ENCODE measurements at regions of chr5 and their contacts with region 1.

Region 1: DNA sequence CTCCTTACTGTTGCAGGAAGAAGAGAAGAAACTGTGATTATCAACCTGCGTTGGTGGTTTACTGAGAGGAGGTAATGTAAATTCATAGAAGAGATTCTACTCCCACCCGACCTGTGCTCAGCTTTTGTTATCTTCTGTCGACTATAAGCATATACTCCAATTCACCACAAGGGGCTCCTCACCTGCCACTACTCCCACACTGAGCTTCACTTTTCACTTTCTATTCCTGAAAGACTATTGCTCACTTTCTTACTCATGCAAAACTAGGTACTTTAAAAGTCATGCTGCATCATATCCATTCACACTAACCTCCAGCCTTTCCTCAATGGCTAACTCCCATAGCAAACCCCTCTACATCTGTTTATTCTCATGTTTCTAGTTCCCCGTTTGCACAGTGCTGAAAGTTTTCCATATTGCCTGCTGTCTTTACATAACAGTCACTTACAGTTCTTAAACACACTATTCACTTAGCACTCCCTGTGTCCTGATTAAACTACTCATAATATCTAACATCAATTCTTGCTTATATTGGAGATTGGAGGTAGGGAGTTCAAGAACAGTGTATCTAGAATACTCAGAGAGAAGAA is 1062.6 kb downstream of the NR2F1-AS1 start:
- DNase-seq: peak; percentile 62
- H3K4me3 ChIP-seq: no peak overlapping the region
- H3K27ac ChIP-seq: no peak overlapping the region
- H3K4me1 ChIP-seq: no peaks in the 10 kb centered on the region
- H3K27me3 ChIP-seq: no peaks in the 10 kb centered on the region
- CTCF ChIP-seq: peak; percentile 79 to 88

Region 2: GRCh38 chr5:92378966-92379611 is 139.3 kb before region 1 on chr5:
- CTCF ChIA-PET with region 1: no interaction called
- dilution Hi-C with region 1: no loop called
- in situ Hi-C with region 1: no loop called
- intact Hi-C with region 1: no loop called
- DNase-seq: peak; percentile 13
- H3K4me3 ChIP-seq: no peak overlapping the region
- H3K27ac ChIP-seq: no peak overlapping the region
- H3K4me1 ChIP-seq: no peaks in the 10 kb centered on the region
- H3K27me3 ChIP-seq: no peaks in the 10 kb centered on the region
- CTCF ChIP-seq: no peak

Region 3: DNA sequence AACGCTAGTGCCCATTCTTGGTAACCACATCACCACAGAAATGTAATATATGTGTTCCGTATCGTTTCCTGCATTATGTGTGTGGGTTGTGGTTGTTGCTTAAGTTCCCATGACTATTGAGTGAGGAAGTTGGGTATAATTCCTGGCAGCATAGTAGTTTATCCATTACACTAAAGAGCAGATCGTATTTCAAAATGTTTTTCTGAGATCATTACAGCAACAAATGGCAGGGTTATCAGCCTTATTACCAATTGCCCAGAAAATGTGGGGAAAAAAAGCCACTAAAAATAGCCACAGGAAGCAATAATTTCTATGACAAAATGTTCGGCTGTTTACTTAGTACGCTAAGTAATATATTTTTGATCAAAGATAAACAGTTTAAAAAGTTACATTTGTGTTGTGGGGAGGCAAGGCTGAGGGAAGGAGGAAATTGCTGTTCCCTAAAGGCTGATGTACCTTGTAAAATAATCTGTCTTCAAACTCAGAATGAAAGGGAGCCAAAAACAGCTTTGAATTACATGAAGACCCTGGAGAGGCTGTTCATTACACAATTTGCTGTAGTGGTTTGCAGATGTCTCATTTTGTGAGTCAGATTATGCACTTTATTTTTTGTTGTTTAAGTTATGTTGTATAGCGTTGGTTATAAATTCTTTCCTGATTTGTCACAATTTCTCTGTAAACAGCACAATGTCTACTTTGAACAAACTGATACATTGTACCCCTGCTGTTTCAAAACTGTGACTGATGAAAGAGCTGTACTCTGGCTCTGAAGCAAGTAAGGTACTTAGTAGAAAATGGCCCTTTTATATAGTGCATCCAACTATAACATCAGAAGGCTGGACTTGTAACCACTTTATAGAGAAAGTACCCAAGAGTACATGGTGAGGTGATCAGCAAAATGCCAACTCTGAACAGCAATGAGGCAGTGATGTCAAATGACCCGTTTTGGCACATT is 34.1 kb after region 1 on chr5:
- CTCF ChIA-PET with region 1: interaction called, 5 read pairs
- dilution Hi-C with region 1: no loop called
- in situ Hi-C with region 1: no loop called
- intact Hi-C with region 1: loop called (anchors 5 kb)
- DNase-seq: peak; percentile 93
- H3K4me3 ChIP-seq: peak overlapping the region in 2 of 3 experiments; percentile 20 to 35
- H3K27ac ChIP-seq: peak overlapping the region; percentile 98
- H3K4me1 ChIP-seq: peaks cover 13% of the 10 kb centered on the region
- H3K27me3 ChIP-seq: no peaks in the 10 kb centered on the region
- CTCF ChIP-seq: no peak

Region 4: GRCh38 chr5:92616085-92616484 is 97.7 kb after region 1 on chr5:
- CTCF ChIA-PET with region 1: no interaction called
- dilution Hi-C with region 1: no loop called
- in situ Hi-C with region 1: no loop called
- intact Hi-C with region 1: no loop called
- DNase-seq: no peak
- H3K4me3 ChIP-seq: no peak overlapping the region
- H3K27ac ChIP-seq: no peak overlapping the region
- H3K4me1 ChIP-seq: no peaks in the 10 kb centered on the region
- H3K27me3 ChIP-seq: no peaks in the 10 kb centered on the region
- CTCF ChIP-seq: no peak

Region 5: GRCh38 chr5:92641031-92641962 is 122.9 kb after region 1 on chr5:
- CTCF ChIA-PET with region 1: no interaction called
- dilution Hi-C with region 1: no loop called
- in situ Hi-C with region 1: no loop called
- intact Hi-C with region 1: loop called (anchors 10 kb)
- DNase-seq: peak; percentile 17
- H3K4me3 ChIP-seq: peak overlapping the region in 2 of 3 experiments; percentile 8 to 11
- H3K27ac ChIP-seq: no peak overlapping the region
- H3K4me1 ChIP-seq: no peaks in the 10 kb centered on the region
- H3K27me3 ChIP-seq: no peaks in the 10 kb centered on the region
- CTCF ChIP-seq: no peak

Region 6: GRCh38 chr5:92838253-92838652 is 319.8 kb after region 1 on chr5:
- CTCF ChIA-PET with region 1: no interaction called
- dilution Hi-C with region 1: no loop called
- in situ Hi-C with region 1: no loop called
- intact Hi-C with region 1: loop called (anchors 1 kb)
- DNase-seq: peak; percentile 40
- H3K4me3 ChIP-seq: no peak overlapping the region
- H3K27ac ChIP-seq: no peak overlapping the region
- H3K4me1 ChIP-seq: no peaks in the 10 kb centered on the region
- H3K27me3 ChIP-seq: peaks cover 2% of the 10 kb centered on the region
- CTCF ChIP-seq: peak in 1 of 2 donors; percentile 52

Measured in mammary epithelial cell (primary cell).